ENCODE measurements at regions of chr1 and their contacts with region 1.

Region 1: DNA sequence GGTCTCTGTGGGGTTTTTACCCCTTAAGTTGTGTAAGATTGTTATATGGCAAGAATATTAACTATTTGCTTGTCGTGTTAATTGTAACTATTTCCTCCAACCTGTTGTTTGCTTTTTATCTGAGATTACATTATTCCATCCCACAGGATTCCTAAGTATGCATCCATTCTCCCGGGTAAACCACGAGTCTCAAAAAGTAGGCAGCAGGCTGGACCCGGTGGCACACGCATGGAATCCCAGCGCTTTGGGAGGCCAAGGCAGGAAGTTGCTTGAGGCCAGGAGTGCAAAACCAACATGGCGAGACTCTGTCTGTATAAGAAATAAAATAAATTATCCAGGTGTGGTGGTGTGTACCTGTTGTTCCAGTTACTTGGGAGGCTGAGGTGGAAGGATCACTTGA is 12.6 kb upstream of the RSPO1 start:
- DNase-seq: no peak
- H3K4me3 Mint-ChIP-seq: no peak overlapping the region
- H3K27ac Mint-ChIP-seq: no peak overlapping the region
- H3K4me1 Mint-ChIP-seq: no peaks in the 10 kb centered on the region
- H3K27me3 Mint-ChIP-seq: peaks cover 17% of the 10 kb centered on the region

Region 2: DNA sequence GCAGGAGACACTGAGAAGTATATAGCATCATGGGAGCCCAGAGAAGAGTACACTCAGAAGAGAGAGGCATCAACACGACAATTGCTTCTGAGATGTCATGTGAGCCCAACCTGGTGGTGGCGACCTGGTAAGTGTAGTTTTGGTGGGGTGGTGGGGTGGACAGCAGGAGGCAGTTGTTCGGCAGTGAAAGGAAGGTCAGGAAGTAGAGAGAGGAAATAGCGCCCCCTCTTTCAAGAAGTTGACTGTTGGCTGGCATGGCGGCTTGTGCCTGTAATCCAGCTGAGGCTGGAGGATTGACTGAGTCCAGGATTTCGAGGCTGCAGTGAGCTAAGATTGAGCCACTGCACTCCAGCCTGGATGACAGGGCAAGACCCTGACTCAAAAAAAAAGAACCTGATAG is 25.1 kb before region 1 on chr1:
- CTCF ChIA-PET with region 1: no interaction called
- POLR2A ChIA-PET with region 1: interaction called, 10 read pairs
- DNase-seq: no peak
- H3K4me3 Mint-ChIP-seq: no peak overlapping the region
- H3K27ac Mint-ChIP-seq: no peak overlapping the region
- H3K4me1 Mint-ChIP-seq: no peaks in the 10 kb centered on the region
- H3K27me3 Mint-ChIP-seq: peaks cover 36% of the 10 kb centered on the region

Measured in activated CD4-positive, alpha-beta T cell treated with anti-CD3 and anti-CD28 coated beads, Interleukin-2, amount 10 ng/mL, durations not matched to agents 7 days and 5 days (primary cell).